ENCODE measurements at regions of chr21 and their contacts with region 1.

Region 1: GRCh38 chr21:33403779-33404585 is 769 bp downstream of the IFNGR2 start:
- DNase-seq: peak; percentile 67
- ATAC-seq: peak; percentile 39
- H3K4me3 ChIP-seq: peak overlapping the region; percentile 85 to 94 (median 91)
- H3K4me3 Mint-ChIP-seq: peak overlapping the region; percentile 100
- H3K27ac ChIP-seq: peak overlapping the region; percentile 75 to 83
- H3K27ac Mint-ChIP-seq: peak overlapping the region; percentile 99
- H3K4me1 ChIP-seq: peaks cover 59 to 81% of the 10 kb centered on the region in 2 donors
- H3K4me1 Mint-ChIP-seq: peaks cover 71% of the 10 kb centered on the region
- H3K27me3 ChIP-seq: no peaks in the 10 kb centered on the region
- H3K27me3 Mint-ChIP-seq: no peaks in the 10 kb centered on the region
- CTCF ChIP-seq: no peak

Region 2: GRCh38 chr21:33380483-33380998 is 23.4 kb before region 1 on chr21:
- CTCF ChIA-PET with region 1: interaction called, 12 read pairs
- POLR2A ChIA-PET with region 1: interaction called, 27 read pairs
- intact Hi-C with region 1: loop called (anchors 1 kb)
- DNase-seq: peak; percentile 79
- ATAC-seq: peak; percentile 59
- H3K4me3 ChIP-seq: peak overlapping the region in 1 of 5 experiments; percentile 23
- H3K4me3 Mint-ChIP-seq: peak overlapping the region; percentile 85
- H3K27ac ChIP-seq: peak overlapping the region; percentile 96
- H3K27ac Mint-ChIP-seq: peak overlapping the region; percentile 95
- H3K4me1 ChIP-seq: peaks cover 77 to 91% of the 10 kb centered on the region in 2 donors
- H3K4me1 Mint-ChIP-seq: peaks cover 82% of the 10 kb centered on the region
- H3K27me3 ChIP-seq: no peaks in the 10 kb centered on the region
- H3K27me3 Mint-ChIP-seq: no peaks in the 10 kb centered on the region
- CTCF ChIP-seq: no peak

Region 3: DNA sequence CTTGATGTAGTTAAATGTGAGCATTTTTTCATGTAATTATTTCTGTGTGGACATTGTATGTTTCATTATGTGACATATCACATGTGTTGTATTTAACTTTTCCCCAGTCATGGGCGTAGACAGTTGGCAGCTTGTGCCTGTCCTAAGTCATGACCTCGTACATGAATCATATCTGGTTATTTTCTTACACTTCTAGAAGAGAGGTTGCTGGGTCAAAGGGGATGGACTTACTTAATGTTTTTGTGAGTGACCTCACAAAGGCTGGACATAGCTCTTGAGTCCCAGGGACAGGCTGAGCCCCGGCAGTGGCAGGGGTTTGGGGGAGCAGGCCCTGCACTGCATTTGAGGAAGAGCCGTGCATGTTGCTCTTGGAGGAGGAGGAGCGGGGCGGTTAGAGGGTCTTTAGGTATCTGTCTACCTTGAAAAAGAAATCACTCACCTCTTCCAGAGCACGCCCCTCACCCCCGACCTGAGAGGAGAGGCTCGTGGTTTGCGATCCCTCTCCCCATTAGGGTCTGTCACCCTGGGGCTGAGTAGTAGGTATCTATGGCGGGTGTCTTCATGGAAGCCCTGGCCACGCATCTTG is 15.6 kb after region 1 on chr21:
- CTCF ChIA-PET with region 1: interaction called, 4 read pairs
- POLR2A ChIA-PET with region 1: interaction called, 8 read pairs
- intact Hi-C with region 1: loop called (anchors 2 kb)
- DNase-seq: no peak
- ATAC-seq: no peak
- H3K4me3 ChIP-seq: no peak overlapping the region
- H3K4me3 Mint-ChIP-seq: no peak overlapping the region
- H3K27ac ChIP-seq: peak overlapping the region in 1 of 2 donors; percentile 28
- H3K27ac Mint-ChIP-seq: peak overlapping the region; percentile 41
- H3K4me1 ChIP-seq: no peaks in the 10 kb centered on the region
- H3K4me1 Mint-ChIP-seq: peaks cover 12% of the 10 kb centered on the region
- H3K27me3 ChIP-seq: no peaks in the 10 kb centered on the region
- H3K27me3 Mint-ChIP-seq: no peaks in the 10 kb centered on the region
- CTCF ChIP-seq: no peak

Region 4: DNA sequence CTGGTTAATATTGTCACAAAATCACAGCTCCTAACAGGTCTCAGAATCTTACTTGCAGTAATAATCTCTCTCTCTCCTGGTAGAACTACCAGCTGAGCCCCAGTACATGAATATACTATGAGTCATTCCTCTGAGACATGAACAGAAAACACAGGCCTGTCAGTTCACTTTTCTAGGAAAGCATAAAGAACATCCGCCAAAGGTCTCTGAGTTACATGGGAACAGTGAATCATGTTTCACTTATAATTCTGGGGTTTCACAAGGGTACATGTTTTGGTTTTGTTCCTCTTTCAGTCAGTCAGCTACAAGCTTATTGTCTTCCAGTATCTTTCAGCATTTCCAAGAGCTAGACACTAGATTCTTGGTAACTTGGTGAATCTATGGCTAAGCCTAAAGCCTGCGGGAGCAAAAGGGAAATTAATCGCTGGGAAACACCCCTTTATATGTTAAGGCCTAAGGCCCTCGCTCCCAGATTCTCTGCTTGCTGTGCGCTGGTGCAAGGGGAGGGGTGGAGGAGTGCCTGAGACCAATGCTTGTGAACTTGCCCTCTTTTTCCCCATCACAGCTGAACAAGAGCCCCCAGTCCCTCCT is 30.9 kb after region 1 on chr21:
- CTCF ChIA-PET with region 1: interaction called, 4 read pairs
- POLR2A ChIA-PET with region 1: interaction called, 7 read pairs
- intact Hi-C with region 1: loop called (anchors 2 kb)
- DNase-seq: peak; percentile 54
- ATAC-seq: peak; percentile 87
- H3K4me3 ChIP-seq: no peak overlapping the region
- H3K4me3 Mint-ChIP-seq: peak overlapping the region; percentile 68
- H3K27ac ChIP-seq: peak overlapping the region; percentile 51 to 76
- H3K27ac Mint-ChIP-seq: peak overlapping the region; percentile 88
- H3K4me1 ChIP-seq: peaks cover 33 to 48% of the 10 kb centered on the region in 2 donors
- H3K4me1 Mint-ChIP-seq: peaks cover 46% of the 10 kb centered on the region
- H3K27me3 ChIP-seq: no peaks in the 10 kb centered on the region
- H3K27me3 Mint-ChIP-seq: no peaks in the 10 kb centered on the region
- CTCF ChIP-seq: no peak

Region 5: GRCh38 chr21:33598051-33598450 is 194.1 kb after region 1 on chr21:
- CTCF ChIA-PET with region 1: no interaction called
- POLR2A ChIA-PET with region 1: no interaction called
- intact Hi-C with region 1: no loop called
- DNase-seq: no peak
- ATAC-seq: no peak
- H3K4me3 ChIP-seq: no peak overlapping the region
- H3K4me3 Mint-ChIP-seq: no peak overlapping the region
- H3K27ac ChIP-seq: no peak overlapping the region
- H3K27ac Mint-ChIP-seq: no peak overlapping the region
- H3K4me1 ChIP-seq: no peaks in the 10 kb centered on the region
- H3K4me1 Mint-ChIP-seq: no peaks in the 10 kb centered on the region
- H3K27me3 ChIP-seq: no peaks in the 10 kb centered on the region
- H3K27me3 Mint-ChIP-seq: no peaks in the 10 kb centered on the region
- CTCF ChIP-seq: no peak

Region 6: DNA sequence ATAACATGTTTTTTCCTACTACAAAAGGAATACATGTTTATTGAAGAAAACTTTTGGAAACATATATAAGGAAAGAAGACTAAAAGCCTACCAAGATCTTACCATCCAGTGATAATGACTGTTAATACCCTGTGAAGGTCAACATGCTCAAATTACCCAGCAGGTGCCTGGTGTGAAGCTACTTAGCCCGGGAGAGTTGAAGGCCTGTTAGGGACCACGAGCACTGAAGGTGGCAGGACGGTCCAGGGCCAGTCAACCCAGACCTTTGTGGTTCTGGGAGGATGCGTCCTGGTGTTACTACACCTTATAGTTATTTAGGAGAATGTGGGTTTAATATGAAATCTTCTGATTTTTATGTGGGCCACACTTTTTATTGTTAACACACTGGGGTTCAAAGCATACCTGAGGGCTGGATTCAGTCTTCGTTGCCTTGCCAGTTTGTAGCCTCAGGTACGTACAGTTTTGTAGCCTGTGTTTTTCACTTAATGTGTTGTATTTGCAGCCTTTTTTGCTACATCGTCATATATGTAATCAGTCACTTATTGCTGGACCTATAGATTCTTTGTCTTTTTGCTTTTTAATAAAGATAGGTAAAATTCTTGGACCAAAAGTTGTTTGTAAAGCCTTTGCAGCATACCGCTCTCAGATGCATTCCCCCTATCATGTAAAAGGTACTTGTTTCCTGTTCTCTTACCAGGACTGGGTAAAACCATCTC is 248.1 kb after region 1 on chr21:
- CTCF ChIA-PET with region 1: no interaction called
- POLR2A ChIA-PET with region 1: no interaction called
- intact Hi-C with region 1: no loop called
- DNase-seq: no peak
- ATAC-seq: no peak
- H3K4me3 ChIP-seq: no peak overlapping the region
- H3K4me3 Mint-ChIP-seq: no peak overlapping the region
- H3K27ac ChIP-seq: no peak overlapping the region
- H3K27ac Mint-ChIP-seq: no peak overlapping the region
- H3K4me1 ChIP-seq: no peaks in the 10 kb centered on the region
- H3K4me1 Mint-ChIP-seq: no peaks in the 10 kb centered on the region
- H3K27me3 ChIP-seq: no peaks in the 10 kb centered on the region
- H3K27me3 Mint-ChIP-seq: peaks cover 13% of the 10 kb centered on the region
- CTCF ChIP-seq: no peak